PC-9 (cell line): ENCODE measurements at regions of chr17 and their contacts with region 1.

Region 1: DNA sequence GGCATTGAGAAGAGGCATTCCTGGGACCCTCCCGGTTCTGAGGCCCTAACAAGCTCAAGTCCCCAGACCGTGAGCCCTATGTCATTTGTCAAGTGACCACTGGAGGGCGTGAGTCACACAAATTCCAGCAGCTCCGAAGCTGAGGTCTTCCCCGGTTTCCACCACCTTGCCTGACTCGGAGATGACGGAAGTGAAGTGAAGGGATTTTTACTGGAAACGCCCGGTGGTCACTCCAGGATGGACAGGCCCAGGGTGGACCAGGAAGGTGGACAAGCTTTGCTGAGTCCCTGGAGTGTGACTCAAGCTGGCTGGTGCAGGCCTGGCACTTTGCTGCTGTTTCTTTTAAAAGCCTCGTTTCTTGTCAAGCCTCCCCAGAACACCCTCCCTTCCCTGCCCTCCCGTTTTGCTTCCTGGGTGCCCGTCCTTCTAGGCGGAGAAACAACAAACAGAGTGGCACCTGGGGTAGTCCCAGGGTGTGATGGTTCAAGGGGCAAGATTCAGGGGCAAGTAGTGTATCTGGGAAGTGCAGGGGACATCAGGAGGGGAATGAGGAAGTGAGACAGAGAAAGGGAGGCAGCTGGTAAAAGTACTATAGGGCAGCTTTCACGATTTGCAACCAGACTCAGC is 5.3 kb upstream of the NOS2 start:
- DNase-seq: peak; percentile 75 to 81
- H3K4me3 ChIP-seq: peak overlapping the region; percentile 18; the same call in 1 of the 2 replicates
- H3K27ac ChIP-seq: no peak overlapping the region
- H3K4me1 ChIP-seq: no peaks in the 10 kb centered on the region; the same call in 1 of the 2 replicates
- H3K27me3 ChIP-seq: peaks cover 3% of the 10 kb centered on the region; the same call in 1 of the 2 replicates
- CTCF ChIP-seq: peak; percentile 85

Region 2: GRCh38 chr17:27217631-27218030 is 588.0 kb before region 1 on chr17:
- CTCF ChIA-PET with region 1: no interaction called
- POLR2A ChIA-PET with region 1: no interaction called
- intact Hi-C with region 1: no loop called
- DNase-seq: no peak
- H3K4me3 ChIP-seq: no peak overlapping the region
- H3K27ac ChIP-seq: no peak overlapping the region
- H3K4me1 ChIP-seq: no peaks in the 10 kb centered on the region
- H3K27me3 ChIP-seq: no peaks in the 10 kb centered on the region
- CTCF ChIP-seq: no peak

Region 3: GRCh38 chr17:27879987-27880608 is 74.5 kb after region 1 on chr17:
- CTCF ChIA-PET with region 1: interaction called, 18 read pairs
- POLR2A ChIA-PET with region 1: no interaction called
- intact Hi-C with region 1: loop called (anchors 1 kb)
- DNase-seq: peak; percentile 53 to 67
- H3K4me3 ChIP-seq: no peak overlapping the region
- H3K27ac ChIP-seq: no peak overlapping the region
- H3K4me1 ChIP-seq: no peaks in the 10 kb centered on the region
- H3K27me3 ChIP-seq: no peaks in the 10 kb centered on the region
- CTCF ChIP-seq: peak; percentile 88

Region 4: GRCh38 chr17:27892866-27893769 is 87.5 kb after region 1 on chr17 and contains the start of gene LYRM9:
- CTCF ChIA-PET with region 1: interaction called, 6 read pairs
- POLR2A ChIA-PET with region 1: no interaction called
- intact Hi-C with region 1: loop called (anchors 1 kb)
- DNase-seq: peak; percentile 55 to 94
- H3K4me3 ChIP-seq: peak within 1 kb of the TSS; percentile 78
- H3K27ac ChIP-seq: no peak within 1 kb of the TSS
- H3K4me1 ChIP-seq: peaks cover 21% of the 10 kb centered on the region
- H3K27me3 ChIP-seq: no peaks in the 10 kb centered on the region
- CTCF ChIP-seq: peak; percentile 81
- total RNA-seq, gene LYRM9: 7.6 and 9.2 TPM in 2 replicates

Region 5: DNA sequence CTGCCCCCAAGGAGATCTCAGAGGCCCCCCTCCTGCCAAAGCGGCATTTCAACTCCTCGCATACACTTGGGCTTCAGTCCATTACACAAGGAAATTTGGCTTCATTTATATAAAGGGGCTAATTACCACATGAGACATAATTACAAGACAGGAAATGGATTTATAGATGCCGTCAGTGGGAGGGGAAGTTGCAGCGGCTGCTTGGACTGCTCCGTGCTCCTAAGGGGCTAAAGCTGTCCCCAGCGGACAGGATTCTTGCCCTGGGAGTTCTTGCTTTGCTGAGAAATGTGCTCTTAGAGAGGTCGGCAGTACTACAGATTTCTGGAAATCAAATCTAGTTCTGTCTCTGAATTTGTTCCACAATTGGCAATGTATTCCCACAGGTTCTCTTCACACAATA is 179.7 kb after region 1 on chr17:
- CTCF ChIA-PET with region 1: no interaction called
- POLR2A ChIA-PET with region 1: no interaction called
- intact Hi-C with region 1: loop called (anchors 5 kb)
- DNase-seq: no peak
- H3K4me3 ChIP-seq: no peak overlapping the region
- H3K27ac ChIP-seq: no peak overlapping the region
- H3K4me1 ChIP-seq: peaks cover 14% of the 10 kb centered on the region
- H3K27me3 ChIP-seq: no peaks in the 10 kb centered on the region
- CTCF ChIP-seq: no peak

Region 6: GRCh38 chr17:28240991-28241340 is 435.3 kb after region 1 on chr17:
- CTCF ChIA-PET with region 1: no interaction called
- POLR2A ChIA-PET with region 1: no interaction called
- intact Hi-C with region 1: no loop called
- DNase-seq: no peak
- H3K4me3 ChIP-seq: no peak overlapping the region
- H3K27ac ChIP-seq: no peak overlapping the region
- H3K4me1 ChIP-seq: no peaks in the 10 kb centered on the region
- H3K27me3 ChIP-seq: no peaks in the 10 kb centered on the region
- CTCF ChIP-seq: no peak

Region 7: GRCh38 chr17:28252436-28252835 is 446.8 kb after region 1 on chr17:
- CTCF ChIA-PET with region 1: interaction called, 7 read pairs
- POLR2A ChIA-PET with region 1: no interaction called
- intact Hi-C with region 1: loop called (anchors 5 kb)
- DNase-seq: no peak
- H3K4me3 ChIP-seq: no peak overlapping the region
- H3K27ac ChIP-seq: no peak overlapping the region
- H3K4me1 ChIP-seq: peaks cover 11% of the 10 kb centered on the region; the same call in 1 of the 2 replicates
- H3K27me3 ChIP-seq: no peaks in the 10 kb centered on the region; the same call in 1 of the 2 replicates
- CTCF ChIP-seq: no peak

Region 8: GRCh38 chr17:28357061-28357900 is 551.6 kb after region 1 on chr17 and contains the start of gene POLDIP2:
- CTCF ChIA-PET with region 1: interaction called, 16 read pairs
- POLR2A ChIA-PET with region 1: no interaction called
- intact Hi-C with region 1: no loop called
- DNase-seq: peak; percentile 87 to 94
- H3K4me3 ChIP-seq: peak within 1 kb of the TSS; percentile 84
- H3K27ac ChIP-seq: peak within 1 kb of the TSS; percentile 23; the same call in 1 of the 2 replicates
- H3K4me1 ChIP-seq: peaks cover 19% of the 10 kb centered on the region
- H3K27me3 ChIP-seq: no peaks in the 10 kb centered on the region
- CTCF ChIP-seq: no peak
- total RNA-seq, gene POLDIP2: 84.5 and 98.2 TPM in 2 replicates

Region 9: GRCh38 chr17:28416703-28417311 is 611.2 kb after region 1 on chr17:
- CTCF ChIA-PET with region 1: interaction called, 15 read pairs
- POLR2A ChIA-PET with region 1: no interaction called
- intact Hi-C with region 1: loop called (anchors 5 kb)
- DNase-seq: peak; percentile 44 to 55
- H3K4me3 ChIP-seq: no peak overlapping the region
- H3K27ac ChIP-seq: no peak overlapping the region
- H3K4me1 ChIP-seq: no peaks in the 10 kb centered on the region
- H3K27me3 ChIP-seq: no peaks in the 10 kb centered on the region
- CTCF ChIP-seq: peak; percentile 77